ENCODE measurements at regions of chr18 and their contacts with region 1.

Region 1: DNA sequence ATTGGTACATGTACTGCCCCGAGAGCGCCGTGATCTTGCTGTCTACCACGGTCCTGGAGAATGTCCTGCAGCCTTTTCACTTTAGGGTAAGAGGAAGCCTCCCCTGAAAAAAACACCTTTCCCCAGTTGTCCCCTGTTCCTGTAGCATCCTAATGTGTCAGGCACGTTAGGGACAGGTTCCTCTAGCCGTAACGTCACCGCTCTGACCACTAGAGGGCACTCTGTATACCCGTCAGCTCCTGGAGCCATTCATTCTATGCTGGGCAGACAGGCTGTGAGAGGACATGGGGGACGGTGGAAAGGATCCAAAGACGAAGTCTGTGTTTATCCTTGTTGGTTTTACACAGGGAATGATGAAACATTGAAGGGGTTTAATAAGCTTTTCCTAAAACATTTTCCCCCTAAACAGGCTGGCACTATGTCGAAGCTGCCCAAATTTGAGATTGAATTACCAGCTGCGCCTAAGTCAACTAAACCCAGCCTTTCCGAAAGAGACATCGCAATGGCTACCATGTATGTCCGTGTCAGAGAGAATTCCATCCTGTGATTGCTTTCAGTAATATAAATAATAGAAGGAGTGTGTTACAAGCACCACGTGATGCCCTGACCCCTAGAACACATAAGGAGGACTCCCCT is 12.7 kb downstream of the RMC1 start:
- DNase-seq: peak; percentile 86
- H3K4me3 ChIP-seq: no peak overlapping the region
- H3K27ac ChIP-seq: no peak overlapping the region
- H3K4me1 ChIP-seq: no peaks in the 10 kb centered on the region
- H3K27me3 ChIP-seq: no peaks in the 10 kb centered on the region
- CTCF ChIP-seq: peak; percentile 94

Region 2: DNA sequence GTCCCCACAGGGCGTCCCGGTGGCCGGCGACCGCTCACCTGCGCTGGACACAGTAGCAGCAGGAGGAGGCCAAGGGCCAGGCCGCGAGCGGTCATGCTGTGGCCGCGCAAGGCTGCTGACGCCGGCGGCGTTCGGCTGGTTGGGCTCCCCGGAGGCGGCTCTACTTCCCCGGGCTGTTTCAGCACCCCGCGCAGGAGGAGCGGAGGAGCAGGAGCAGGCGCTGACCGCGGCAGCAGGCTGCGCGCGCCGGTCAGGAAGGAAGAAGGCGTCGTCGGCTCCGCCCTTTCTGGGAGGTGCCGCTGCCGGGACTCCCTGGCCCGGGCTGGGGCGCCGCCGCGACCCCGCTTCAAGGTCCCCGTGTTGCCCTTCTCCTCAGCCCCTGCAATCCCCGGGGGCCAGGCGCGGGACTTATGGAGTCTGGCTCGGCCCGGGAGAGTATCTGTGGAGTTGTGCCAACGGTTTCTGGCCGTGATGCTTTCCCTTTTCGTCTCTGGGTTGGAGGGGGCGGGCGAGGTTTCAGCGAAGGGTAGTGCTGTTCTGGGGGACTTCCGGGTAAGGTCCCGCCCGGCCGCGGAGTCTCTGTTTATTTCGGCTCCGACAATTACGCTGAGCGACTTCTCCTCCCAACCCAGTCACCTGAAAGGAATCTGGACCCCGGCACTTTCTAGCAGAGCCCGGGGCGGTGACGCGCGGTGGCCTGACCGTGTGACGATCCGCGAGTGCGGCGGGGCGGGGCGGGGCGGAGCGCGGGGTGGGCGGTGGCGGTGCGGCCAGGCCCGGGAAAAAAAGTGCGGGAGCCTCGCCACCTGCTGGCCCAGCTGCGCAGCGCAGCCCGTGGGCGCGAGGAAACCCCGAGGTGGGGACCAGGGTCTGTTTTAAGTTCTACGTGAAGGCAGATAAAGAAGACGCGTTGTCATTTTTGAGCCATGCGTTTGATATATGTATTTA is 70.5 kb after region 1 on chr18 and contains the start of gene NPC1:
- CTCF ChIA-PET with region 1: no interaction called
- POLR2A ChIA-PET with region 1: no interaction called
- intact Hi-C with region 1: loop called (anchors 5 kb)
- DNase-seq: peak; percentile 95
- H3K4me3 ChIP-seq: peak within 1 kb of the TSS; percentile 95
- H3K27ac ChIP-seq: peak within 1 kb of the TSS; percentile 99
- H3K4me1 ChIP-seq: peaks cover 20% of the 10 kb centered on the region
- H3K27me3 ChIP-seq: no peaks in the 10 kb centered on the region
- CTCF ChIP-seq: peak; percentile 73
- total RNA-seq, gene NPC1: 50.5 and 53.0 TPM in 2 replicates

Region 3: DNA sequence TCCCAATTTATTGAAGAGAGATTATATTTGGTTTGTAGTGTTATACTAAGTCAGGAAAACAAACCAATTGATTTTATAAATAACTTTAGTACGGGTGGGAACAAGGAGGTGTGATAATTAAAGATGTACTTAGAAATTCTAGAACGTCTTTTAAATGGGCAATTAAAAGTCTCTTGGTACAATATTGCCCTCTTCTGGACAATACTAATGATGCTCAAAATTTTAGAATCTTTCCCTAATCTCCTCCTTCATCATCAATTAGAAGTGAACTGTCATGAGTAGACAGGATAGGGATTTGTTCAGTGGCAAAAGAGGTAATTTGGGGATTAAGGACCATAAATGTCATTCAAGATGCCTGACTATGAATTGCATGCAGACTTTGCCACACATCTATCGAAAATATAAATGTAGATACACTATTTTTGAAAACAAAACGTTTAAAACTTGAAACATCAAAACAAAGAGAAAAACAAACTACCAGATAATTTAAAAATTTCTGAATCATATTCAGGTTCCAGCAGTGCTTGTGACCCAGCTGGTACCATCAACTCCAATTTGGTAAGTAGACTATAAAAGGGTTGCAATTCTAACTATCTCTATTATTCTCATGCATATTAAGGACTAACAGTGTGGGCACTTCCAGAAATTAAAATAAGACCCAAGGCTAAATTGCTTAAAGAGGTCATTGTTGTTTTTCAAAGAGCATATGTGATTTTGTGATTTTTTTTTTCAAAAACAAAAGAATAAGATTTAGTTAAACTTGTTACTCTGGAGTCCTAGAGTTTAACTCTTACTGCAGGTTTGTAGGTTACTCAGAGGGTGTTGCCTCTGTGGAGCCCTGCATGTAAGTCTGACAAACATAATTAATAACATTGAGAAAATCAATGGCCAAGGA is 296.8 kb after region 1 on chr18:
- CTCF ChIA-PET with region 1: no interaction called
- POLR2A ChIA-PET with region 1: no interaction called
- intact Hi-C with region 1: loop called (anchors 1 kb)
- DNase-seq: peak; percentile 66
- H3K4me3 ChIP-seq: no peak overlapping the region
- H3K27ac ChIP-seq: no peak overlapping the region
- H3K4me1 ChIP-seq: no peaks in the 10 kb centered on the region
- H3K27me3 ChIP-seq: no peaks in the 10 kb centered on the region
- CTCF ChIP-seq: peak; percentile 65

Measured in A673 (cell line).